Gastrocnemius medialis (tissue), 4 donors: ENCODE measurements at regions of chr17 and their contacts with region 1.

Region 1: DNA sequence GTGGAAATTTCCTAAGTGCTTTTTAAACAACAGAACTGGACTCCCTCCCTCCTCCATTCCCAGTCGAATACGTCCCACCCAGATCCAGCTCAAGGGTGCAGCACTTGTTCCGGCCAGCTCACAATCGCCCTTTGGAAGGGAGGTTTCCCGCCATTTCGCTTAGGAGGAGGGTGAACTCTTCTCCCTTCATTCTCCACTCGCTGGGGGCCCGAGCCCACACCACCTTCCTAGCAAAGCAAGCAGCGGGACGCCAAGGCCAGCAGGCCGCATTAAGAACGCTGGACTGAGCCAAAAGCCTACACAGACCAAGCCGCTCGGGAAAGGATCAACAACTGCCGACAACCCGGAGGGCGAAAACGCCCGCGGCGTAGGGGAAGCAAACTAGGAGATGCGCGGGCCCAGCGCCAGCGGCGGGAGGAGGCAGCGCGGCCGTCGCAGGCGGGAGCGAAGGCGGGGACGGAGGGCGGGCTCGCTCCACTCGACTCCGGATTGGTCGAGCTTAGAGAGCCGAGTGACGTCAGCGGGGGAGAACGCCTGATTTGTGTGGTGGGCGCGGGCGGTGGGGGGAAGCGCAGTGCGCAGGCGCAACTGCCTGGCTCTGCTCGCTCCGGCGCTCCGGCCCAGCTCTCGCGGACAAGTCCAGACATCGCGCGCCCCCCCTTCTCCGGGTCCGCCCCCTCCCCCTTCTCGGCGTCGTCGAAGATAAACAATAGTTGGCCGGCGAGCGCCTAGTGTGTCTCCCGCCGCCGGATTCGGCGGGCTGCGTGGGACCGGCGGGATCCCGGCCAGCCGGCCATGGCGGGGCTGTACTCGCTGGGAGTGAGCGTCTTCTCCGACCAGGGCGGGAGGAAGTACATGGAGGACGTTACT is at the start of gene PPM1D:
- DNase-seq: peak; percentile 98 to 99
- ATAC-seq: peak; percentile 89 to 92
- H3K4me3 ChIP-seq: peak within 1 kb of the TSS; percentile 87 to 96 (median 91)
- H3K27ac ChIP-seq: peak within 1 kb of the TSS; percentile 95 to 98 (median 98)
- H3K4me1 ChIP-seq: peaks cover 30% of the 10 kb centered on the region in 2 donors
- H3K27me3 ChIP-seq: no peaks in the 10 kb centered on the region
- CTCF ChIP-seq: peak in 2 of 5 experiments; percentile 13 to 20
- POLR2A ChIP-seq: peak; percentile 98 to 99
- total RNA-seq, gene PPM1D: 4.6 to 11.4 (median 9.2) TPM

Region 2: GRCh38 chr17:60577147-60577915 is 22.5 kb before region 1 on chr17:
- in situ Hi-C with region 1: no loop called
- intact Hi-C with region 1: loop called (anchors 2 kb)
- DNase-seq: peak in 1 of 2 donors; percentile 28
- ATAC-seq: peak; percentile 78 to 91
- H3K4me3 ChIP-seq: peak overlapping the region; percentile 25 to 43 (median 41)
- H3K27ac ChIP-seq: peak overlapping the region; percentile 56 to 72 (median 66)
- H3K4me1 ChIP-seq: peaks cover 4 to 6% of the 10 kb centered on the region in 2 donors
- H3K27me3 ChIP-seq: no peaks in the 10 kb centered on the region
- CTCF ChIP-seq: peak; percentile 19 to 58 (median 32)
- POLR2A ChIP-seq: no peak

Region 3: GRCh38 chr17:60677308-60678124 is 77.7 kb after region 1 on chr17 and contains the start of gene BCAS3:
- in situ Hi-C with region 1: no loop called
- intact Hi-C with region 1: loop called (anchors 2 kb)
- DNase-seq: peak; percentile 99
- ATAC-seq: peak; percentile 96 to 98
- H3K4me3 ChIP-seq: peak within 1 kb of the TSS; percentile 58 to 91 (median 87)
- H3K27ac ChIP-seq: peak within 1 kb of the TSS; percentile 85 to 92 (median 90)
- H3K4me1 ChIP-seq: peaks cover 6 to 8% of the 10 kb centered on the region in 2 donors
- H3K27me3 ChIP-seq: no peaks in the 10 kb centered on the region
- CTCF ChIP-seq: no peak
- POLR2A ChIP-seq: peak; percentile 83 to 95
- total RNA-seq, gene BCAS3: 18.2 to 60.6 (median 23.4) TPM